Endothelial cell of umbilical vein (primary cell): ENCODE measurements at regions of chr5 and their contacts with region 1.

Region 1: DNA sequence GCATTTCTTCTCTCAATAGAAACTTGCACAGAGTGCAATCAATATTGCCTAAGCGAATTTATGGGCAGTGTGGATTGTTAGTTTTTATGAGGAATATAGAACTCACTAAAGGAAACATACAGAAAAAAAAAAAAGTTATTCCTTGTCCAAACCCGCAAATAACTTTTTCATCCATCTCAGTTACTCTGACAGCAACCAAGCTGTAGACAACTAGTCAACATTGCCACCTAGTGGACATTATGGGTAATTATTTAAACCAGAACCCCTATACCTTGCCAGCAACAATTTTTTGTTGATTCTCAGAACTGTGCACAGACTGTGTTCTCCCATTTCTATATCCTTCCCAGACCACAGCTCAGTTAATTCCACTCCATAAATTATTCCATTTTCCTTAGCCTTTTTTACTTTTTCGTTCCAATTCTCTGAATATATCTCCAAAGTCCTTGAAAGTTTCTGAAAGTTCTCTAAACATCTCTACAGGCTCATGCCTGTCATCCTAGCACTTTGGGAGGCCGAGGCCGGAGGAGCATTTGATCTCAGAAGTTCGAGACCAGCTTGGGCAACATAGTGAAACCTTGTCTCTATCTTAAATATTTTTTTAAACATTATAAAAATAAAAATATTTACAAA is 2.6 kb upstream of the AFAP1L1 start:
- DNase-seq: peak; percentile 47
- H3K4me3 ChIP-seq: no peak overlapping the region
- H3K27ac ChIP-seq: no peak overlapping the region
- H3K4me1 ChIP-seq: peaks cover 14% of the 10 kb centered on the region
- H3K27me3 ChIP-seq: peaks cover 0 to 1% of the 10 kb centered on the region in 2 experiments
- CTCF ChIP-seq: peak; percentile 49 to 57
- POLR2A ChIP-seq: no peak

Region 2: DNA sequence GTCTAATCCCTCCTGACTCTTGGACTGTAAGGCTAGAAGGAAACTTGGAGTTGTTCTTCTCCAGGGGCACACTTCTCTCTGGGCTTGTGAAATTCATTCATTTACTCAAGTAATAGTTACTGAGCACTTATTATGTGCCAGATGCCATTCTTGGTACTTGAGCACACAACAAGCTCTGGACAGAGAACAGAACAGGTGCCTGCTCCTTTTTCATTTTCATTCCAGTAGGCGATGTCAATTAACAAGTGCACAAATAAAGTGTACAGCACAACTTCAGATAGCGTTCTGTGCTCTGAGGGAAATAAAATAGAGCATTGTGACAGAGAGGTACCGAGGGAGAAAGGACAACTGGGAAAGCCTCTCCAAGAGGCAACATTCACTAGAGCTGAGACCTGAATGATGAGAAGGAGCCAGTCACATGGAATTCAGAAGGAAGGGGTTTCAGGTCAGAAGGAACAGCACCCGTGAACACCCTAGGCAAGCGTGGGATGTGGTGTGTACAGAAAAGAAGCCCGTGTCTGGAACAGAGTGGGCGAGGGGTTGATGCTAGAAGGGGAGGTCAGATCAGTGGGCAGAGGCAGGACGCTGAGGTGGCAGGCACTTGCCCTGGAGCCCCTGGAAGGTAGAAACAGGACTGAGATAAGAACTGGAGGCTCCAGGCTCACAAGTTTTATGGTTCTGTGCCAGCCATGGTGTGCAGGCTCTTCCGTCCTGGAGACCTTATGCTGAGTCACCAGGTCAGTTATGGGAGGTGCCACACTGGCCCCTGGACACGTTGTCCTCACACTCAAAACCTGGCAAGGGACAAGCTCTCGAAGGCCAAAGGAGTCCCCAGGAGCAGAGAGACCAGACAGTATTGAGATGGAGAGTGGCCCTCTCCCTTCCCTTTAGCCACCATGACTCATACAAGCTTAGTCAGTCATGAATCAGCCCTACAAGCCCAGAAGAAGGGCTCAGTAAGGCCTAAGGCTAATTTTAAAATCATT is 135.0 kb before region 1 on chr5:
- CTCF ChIA-PET with region 1: interaction called, 39 read pairs
- POLR2A ChIA-PET with region 1: no interaction called
- dilution Hi-C with region 1: no loop called
- intact Hi-C with region 1: loop called (anchors 1 kb)
- DNase-seq: peak; percentile 79
- H3K4me3 ChIP-seq: no peak overlapping the region
- H3K27ac ChIP-seq: peak overlapping the region; percentile 96
- H3K4me1 ChIP-seq: peaks cover 36% of the 10 kb centered on the region
- H3K27me3 ChIP-seq: no peaks in the 10 kb centered on the region
- CTCF ChIP-seq: no peak
- POLR2A ChIP-seq: no peak

Region 3: GRCh38 chr5:149254506-149254905 is 14.5 kb before region 1 on chr5:
- CTCF ChIA-PET with region 1: interaction called, 22 read pairs
- POLR2A ChIA-PET with region 1: no interaction called
- dilution Hi-C with region 1: no loop called
- intact Hi-C with region 1: no loop called
- DNase-seq: no peak
- H3K4me3 ChIP-seq: no peak overlapping the region
- H3K27ac ChIP-seq: no peak overlapping the region
- H3K4me1 ChIP-seq: no peaks in the 10 kb centered on the region
- H3K27me3 ChIP-seq: no peaks in the 10 kb centered on the region
- CTCF ChIP-seq: no peak
- POLR2A ChIP-seq: no peak

Region 4: DNA sequence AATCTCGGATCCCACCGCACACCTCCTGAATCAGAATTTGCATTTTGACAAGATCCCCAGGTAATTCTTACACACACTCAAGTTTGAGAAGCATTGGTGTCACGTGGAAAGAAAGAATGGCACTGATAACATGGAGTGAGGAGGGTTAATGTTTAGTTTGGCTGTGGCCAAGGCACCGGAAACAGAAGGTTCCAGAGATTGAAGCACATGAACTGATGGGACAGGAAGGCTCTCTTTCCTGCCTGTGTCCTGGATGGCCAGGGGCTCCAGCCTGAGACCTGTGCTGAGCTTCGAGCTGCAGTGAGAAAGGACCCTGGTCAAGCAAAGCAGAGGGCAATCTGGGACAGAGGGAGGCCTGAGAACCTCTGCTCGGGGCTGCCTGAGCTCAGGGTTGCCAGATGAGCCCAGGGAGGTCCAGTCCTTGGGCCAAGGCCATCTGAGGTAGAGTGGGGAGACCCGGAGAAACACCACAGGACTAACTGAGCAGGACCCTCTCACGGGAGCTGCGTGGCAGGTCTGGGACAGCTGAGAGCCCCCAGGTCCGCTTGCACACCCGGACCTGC is 29.9 kb after region 1 on chr5:
- CTCF ChIA-PET with region 1: interaction called, 12 read pairs
- POLR2A ChIA-PET with region 1: no interaction called
- dilution Hi-C with region 1: no loop called
- intact Hi-C with region 1: no loop called
- DNase-seq: peak; percentile 97
- H3K4me3 ChIP-seq: no peak overlapping the region
- H3K27ac ChIP-seq: peak overlapping the region; percentile 80
- H3K4me1 ChIP-seq: peaks cover 28% of the 10 kb centered on the region
- H3K27me3 ChIP-seq: no peaks in the 10 kb centered on the region
- CTCF ChIP-seq: no peak
- POLR2A ChIP-seq: peak; percentile 75

Region 5: DNA sequence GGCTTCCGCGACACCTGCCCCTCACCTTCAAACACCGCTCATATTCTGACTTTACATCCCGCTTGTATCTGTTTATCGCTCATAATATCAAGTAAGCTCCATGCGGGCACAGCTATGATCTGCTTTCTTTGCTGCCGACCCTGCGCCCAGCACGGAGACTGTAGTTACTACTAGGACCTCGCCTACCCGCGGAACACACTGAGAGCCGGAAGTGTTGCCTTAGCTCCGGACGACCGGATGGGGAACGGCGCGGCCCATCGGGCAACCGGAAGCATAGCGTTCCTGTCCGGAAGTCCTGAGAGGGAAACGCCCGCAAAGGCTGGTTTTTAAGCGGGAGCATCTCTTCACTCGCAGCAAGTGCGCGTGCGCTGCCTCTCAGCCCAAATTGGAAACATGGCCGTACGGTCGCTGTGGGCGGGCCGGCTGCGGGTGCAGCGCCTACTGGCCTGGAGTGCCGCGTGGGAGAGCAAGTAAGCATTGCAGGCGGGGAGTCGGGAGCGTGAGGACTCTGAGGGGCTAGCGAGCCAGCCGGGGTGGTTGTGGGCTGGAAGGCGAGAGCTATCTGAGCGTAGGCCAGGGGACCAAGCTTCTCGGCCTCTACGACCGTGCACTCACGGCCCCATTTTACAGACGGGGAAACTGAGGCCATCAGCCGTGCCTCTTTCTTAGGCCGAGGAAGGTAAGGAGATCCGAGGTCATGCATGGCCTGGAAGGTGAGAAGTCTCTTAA is 76.3 kb after region 1 on chr5 and contains the start of gene GRPEL2:
- CTCF ChIA-PET with region 1: interaction called, 10 read pairs
- POLR2A ChIA-PET with region 1: interaction called, 3 read pairs
- dilution Hi-C with region 1: no loop called
- intact Hi-C with region 1: loop called (anchors 1 kb)
- DNase-seq: peak; percentile 85
- H3K4me3 ChIP-seq: peak within 1 kb of the TSS; percentile 59 to 90 (median 63)
- H3K27ac ChIP-seq: peak within 1 kb of the TSS; percentile 71
- H3K4me1 ChIP-seq: peaks cover 42% of the 10 kb centered on the region
- H3K27me3 ChIP-seq: no peaks in the 10 kb centered on the region
- CTCF ChIP-seq: no peak
- POLR2A ChIP-seq: peak; percentile 83
- total RNA-seq, gene GRPEL2: 32.5 and 41.0 TPM in 2 replicates

Region 6: DNA sequence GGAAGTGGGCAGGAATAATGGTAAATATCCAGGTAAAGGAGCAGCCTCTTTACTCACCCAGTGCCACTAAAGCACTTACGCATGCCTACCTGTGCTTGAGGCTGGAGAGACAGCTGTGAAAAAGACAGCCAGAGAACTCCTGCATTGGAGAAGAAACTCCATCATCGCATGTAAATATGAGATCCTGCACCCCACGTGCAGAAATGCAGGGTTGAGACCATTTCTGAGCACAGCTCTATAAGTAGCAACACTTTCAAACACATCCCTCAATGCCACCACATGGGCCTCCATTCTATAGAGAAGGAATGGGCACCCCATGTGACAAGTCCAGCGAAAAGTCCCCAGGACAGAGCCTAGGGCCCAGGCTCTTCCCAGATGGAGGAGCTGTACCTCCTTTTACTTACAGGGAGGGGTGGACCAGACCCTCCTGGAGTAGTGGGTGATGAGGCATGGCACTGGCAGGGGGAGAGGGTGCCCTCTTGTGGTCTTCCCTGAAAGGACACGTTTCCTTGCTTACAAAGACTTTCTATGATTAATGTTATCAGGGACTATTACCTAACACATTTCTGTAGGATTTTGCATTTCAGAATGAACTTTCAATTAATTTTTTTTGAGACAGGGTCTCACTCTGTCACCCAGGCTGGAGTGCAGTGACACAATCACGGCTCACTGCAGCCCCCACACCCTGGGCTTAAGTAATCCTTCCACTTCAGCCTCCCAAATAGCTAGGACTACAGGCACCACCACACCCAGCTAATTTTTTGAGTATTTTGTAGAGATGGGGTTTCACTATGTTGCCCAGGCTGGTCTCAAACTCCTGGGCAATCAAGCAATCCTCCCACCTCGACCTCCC is 165.3 kb after region 1 on chr5:
- CTCF ChIA-PET with region 1: interaction called, 21 read pairs
- POLR2A ChIA-PET with region 1: no interaction called
- dilution Hi-C with region 1: no loop called
- intact Hi-C with region 1: loop called (anchors 1 kb)
- DNase-seq: peak; percentile 64
- H3K4me3 ChIP-seq: no peak overlapping the region
- H3K27ac ChIP-seq: no peak overlapping the region
- H3K4me1 ChIP-seq: peaks cover 14% of the 10 kb centered on the region
- H3K27me3 ChIP-seq: no peaks in the 10 kb centered on the region
- CTCF ChIP-seq: peak; percentile 82 to 85
- POLR2A ChIP-seq: no peak